PC-3 (cell line): ENCODE measurements at regions of chr14 and their contacts with region 1.

Region 1: GRCh38 chr14:68548194-68549056 is 244.4 kb downstream of the ZFP36L1 start:
- DNase-seq: peak; percentile 97
- ATAC-seq: peak; percentile 82
- H3K4me3 ChIP-seq: peak overlapping the region; percentile 13; the same call in 1 of the 2 replicates
- H3K27ac ChIP-seq: peak overlapping the region; percentile 98
- H3K4me1 ChIP-seq: peaks cover 47% of the 10 kb centered on the region
- H3K27me3 ChIP-seq: no peaks in the 10 kb centered on the region
- CTCF ChIP-seq: no peak

Region 2: GRCh38 chr14:68426661-68427549 is 121.5 kb before region 1 on chr14:
- CTCF ChIA-PET with region 1: no interaction called
- POLR2A ChIA-PET with region 1: no interaction called
- intact Hi-C with region 1: loop called (anchors 5 kb)
- DNase-seq: peak; percentile 45
- ATAC-seq: peak; percentile 58
- H3K4me3 ChIP-seq: no peak overlapping the region
- H3K27ac ChIP-seq: peak overlapping the region; percentile 78
- H3K4me1 ChIP-seq: peaks cover 17% of the 10 kb centered on the region
- H3K27me3 ChIP-seq: no peaks in the 10 kb centered on the region
- CTCF ChIP-seq: no peak

Region 3: GRCh38 chr14:68506021-68506644 is 42.3 kb before region 1 on chr14:
- CTCF ChIA-PET with region 1: interaction called, 3 read pairs
- POLR2A ChIA-PET with region 1: interaction called, 4 read pairs
- intact Hi-C with region 1: loop called (anchors 1 kb)
- DNase-seq: peak; percentile 71
- ATAC-seq: peak; percentile 72
- H3K4me3 ChIP-seq: no peak overlapping the region
- H3K27ac ChIP-seq: peak overlapping the region; percentile 68
- H3K4me1 ChIP-seq: peaks cover 20% of the 10 kb centered on the region
- H3K27me3 ChIP-seq: no peaks in the 10 kb centered on the region
- CTCF ChIP-seq: no peak

Region 4: GRCh38 chr14:68598621-68599447 is 50.4 kb after region 1 on chr14:
- CTCF ChIA-PET with region 1: no interaction called
- POLR2A ChIA-PET with region 1: interaction called, 4 read pairs
- intact Hi-C with region 1: loop called (anchors 1 kb)
- DNase-seq: peak; percentile 97
- ATAC-seq: peak; percentile 92
- H3K4me3 ChIP-seq: peak overlapping the region; percentile 60
- H3K27ac ChIP-seq: peak overlapping the region; percentile 99
- H3K4me1 ChIP-seq: peaks cover 27% of the 10 kb centered on the region
- H3K27me3 ChIP-seq: no peaks in the 10 kb centered on the region
- CTCF ChIP-seq: no peak

Region 5: DNA sequence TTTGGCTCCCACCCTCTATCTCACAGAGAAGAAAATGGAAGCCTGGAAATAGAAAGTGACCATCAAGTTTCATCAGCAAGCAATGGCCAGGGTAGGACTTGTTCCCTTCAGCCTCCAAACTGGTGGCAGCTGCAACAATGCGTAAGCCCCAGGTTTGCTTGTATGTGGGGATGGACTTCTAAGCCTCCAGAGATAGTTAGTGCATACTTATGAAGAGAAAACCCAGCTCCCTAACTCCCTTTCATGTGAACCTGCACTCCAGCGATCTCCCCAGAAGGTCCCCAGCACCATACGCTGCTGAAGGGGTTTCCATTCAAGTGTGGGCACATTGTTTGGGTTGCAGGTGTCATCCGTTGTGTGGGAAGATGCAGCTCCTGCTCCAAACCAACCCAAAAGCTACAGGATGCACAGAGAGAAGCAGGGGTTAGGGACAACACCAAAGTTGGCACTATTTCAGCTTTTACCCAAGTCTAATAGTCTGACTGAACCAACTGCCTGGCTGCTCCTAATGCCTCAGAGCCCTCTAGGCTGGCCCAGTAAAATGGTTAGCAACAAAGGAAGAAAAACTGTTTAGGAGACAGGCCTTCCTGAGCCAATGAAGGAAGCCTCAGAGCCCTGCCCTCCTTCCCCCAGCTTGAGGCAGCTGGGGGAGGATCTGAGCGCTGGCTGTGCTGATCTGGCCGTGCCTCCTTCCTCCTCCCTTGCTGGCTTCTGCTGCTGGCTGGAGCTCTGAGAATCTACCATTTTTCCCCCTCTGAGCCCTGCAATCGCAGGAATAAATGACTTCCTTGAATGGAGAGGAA is 232.1 kb after region 1 on chr14:
- CTCF ChIA-PET with region 1: no interaction called
- POLR2A ChIA-PET with region 1: interaction called, 21 read pairs
- intact Hi-C with region 1: loop called (anchors 1 kb)
- DNase-seq: peak; percentile 43
- ATAC-seq: peak; percentile 20
- H3K4me3 ChIP-seq: peak overlapping the region; percentile 32
- H3K27ac ChIP-seq: peak overlapping the region; percentile 80
- H3K4me1 ChIP-seq: peaks cover 60% of the 10 kb centered on the region
- H3K27me3 ChIP-seq: no peaks in the 10 kb centered on the region
- CTCF ChIP-seq: no peak